ENCODE measurements at regions of chr7 and their contacts with region 1.

Region 1: GRCh38 chr7:32891800-32892520 is 400 bp upstream of the KBTBD2 start:
- H3K4me3 Mint-ChIP-seq: peak overlapping the region; percentile 88
- H3K27ac Mint-ChIP-seq: peak overlapping the region; percentile 100
- H3K4me1 Mint-ChIP-seq: peaks cover 48% of the 10 kb centered on the region
- H3K27me3 Mint-ChIP-seq: no peaks in the 10 kb centered on the region

Region 2: GRCh38 chr7:32335107-32335506 is 556.9 kb before region 1 on chr7:
- intact Hi-C with region 1: no loop called
- H3K4me3 Mint-ChIP-seq: no peak overlapping the region
- H3K27ac Mint-ChIP-seq: no peak overlapping the region
- H3K4me1 Mint-ChIP-seq: no peaks in the 10 kb centered on the region
- H3K27me3 Mint-ChIP-seq: peaks cover 2% of the 10 kb centered on the region

Region 3: DNA sequence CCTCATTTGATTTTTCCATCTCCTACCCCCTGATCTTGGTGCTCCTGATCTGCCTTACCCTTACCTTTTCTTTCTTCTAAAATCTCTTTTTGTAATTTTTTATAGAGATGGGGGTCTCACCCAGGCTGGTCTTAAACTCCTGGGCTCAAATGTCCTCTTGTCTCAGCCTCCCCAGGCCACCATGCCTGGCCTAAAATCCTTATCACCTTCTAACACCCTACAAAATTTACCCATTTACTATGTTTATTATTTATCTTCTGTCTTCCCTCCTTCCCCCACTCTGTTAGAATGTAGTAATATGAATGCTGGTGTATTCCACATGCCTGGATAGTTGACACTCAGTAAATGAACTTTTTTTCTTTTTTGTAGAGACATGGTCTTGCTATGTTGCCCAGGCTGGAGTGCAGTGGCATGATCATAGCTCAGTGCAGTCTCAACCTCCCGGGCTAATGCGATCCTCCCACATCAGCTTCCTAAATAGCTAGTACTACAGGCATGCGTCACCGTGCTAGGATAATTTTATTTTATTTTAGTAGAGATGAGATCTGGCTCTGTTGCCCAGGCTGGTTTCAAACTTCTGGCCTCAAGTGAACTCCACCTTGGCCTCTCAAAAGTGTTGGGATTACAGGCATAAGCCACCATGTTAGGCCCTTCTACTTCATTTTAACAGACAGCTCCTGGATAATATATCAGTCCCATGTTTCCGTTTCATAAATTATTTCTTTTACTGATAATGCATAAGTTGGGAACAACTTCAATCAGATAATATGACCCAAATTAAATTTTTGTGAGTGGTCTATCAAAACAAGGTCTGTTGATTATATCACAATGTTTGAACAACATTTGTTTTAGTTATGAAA is 260.1 kb before region 1 on chr7:
- intact Hi-C with region 1: no loop called
- H3K4me3 Mint-ChIP-seq: no peak overlapping the region
- H3K27ac Mint-ChIP-seq: no peak overlapping the region
- H3K4me1 Mint-ChIP-seq: peaks cover 5% of the 10 kb centered on the region
- H3K27me3 Mint-ChIP-seq: peaks cover 2% of the 10 kb centered on the region

Region 4: GRCh38 chr7:32905175-32905662 is 13.3 kb after region 1 on chr7:
- intact Hi-C with region 1: loop called (anchors 1 kb)
- H3K4me3 Mint-ChIP-seq: peak overlapping the region; percentile 52
- H3K27ac Mint-ChIP-seq: peak overlapping the region; percentile 79
- H3K4me1 Mint-ChIP-seq: peaks cover 13% of the 10 kb centered on the region
- H3K27me3 Mint-ChIP-seq: no peaks in the 10 kb centered on the region

Measured in dendritic cell treated with granulocyte-macrophage colony-stimulating factor and Interleukin-4, amounts not matched to agents 40 ng/mL and 50 ng/mL, for 4 days (primary cell).